ENCODE measurements at regions of chr18 and their contacts with region 1.

Region 1: GRCh38 chr18:32899819-32900218 is 127.0 kb upstream of the KLHL14 start:
- DNase-seq: no peak
- ATAC-seq: no peak
- H3K4me3 ChIP-seq: no peak overlapping the region
- H3K27ac ChIP-seq: no peak overlapping the region
- H3K4me1 ChIP-seq: no peaks in the 10 kb centered on the region
- H3K27me3 ChIP-seq: no peaks in the 10 kb centered on the region
- CTCF ChIP-seq: no peak

Region 2: DNA sequence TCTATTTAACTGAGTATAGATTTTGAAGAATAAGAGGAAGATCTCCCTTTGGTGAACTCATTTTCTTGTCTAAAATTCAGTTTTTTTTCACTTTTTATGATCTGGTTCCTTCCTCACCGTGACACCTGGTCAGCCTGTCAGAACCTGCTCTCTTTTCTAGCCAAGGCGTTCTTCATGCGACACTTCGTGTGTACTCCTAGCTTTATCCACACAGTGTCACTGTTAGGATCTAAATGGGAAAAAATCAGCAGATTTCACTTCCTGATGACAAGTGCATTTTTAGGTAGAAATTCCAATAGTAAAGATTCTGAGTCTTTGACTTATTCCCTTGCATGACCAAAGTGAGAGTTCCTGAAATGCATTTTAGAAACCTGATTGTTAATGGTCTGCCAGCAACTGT is 216.8 kb before region 1 on chr18:
- intact Hi-C with region 1: no loop called
- DNase-seq: no peak
- ATAC-seq: no peak
- H3K4me3 ChIP-seq: no peak overlapping the region
- H3K27ac ChIP-seq: no peak overlapping the region
- H3K4me1 ChIP-seq: no peaks in the 10 kb centered on the region
- H3K27me3 ChIP-seq: peaks cover 0 to 11% (median 0%) of the 10 kb centered on the region in 7 donors
- CTCF ChIP-seq: no peak

Region 3: DNA sequence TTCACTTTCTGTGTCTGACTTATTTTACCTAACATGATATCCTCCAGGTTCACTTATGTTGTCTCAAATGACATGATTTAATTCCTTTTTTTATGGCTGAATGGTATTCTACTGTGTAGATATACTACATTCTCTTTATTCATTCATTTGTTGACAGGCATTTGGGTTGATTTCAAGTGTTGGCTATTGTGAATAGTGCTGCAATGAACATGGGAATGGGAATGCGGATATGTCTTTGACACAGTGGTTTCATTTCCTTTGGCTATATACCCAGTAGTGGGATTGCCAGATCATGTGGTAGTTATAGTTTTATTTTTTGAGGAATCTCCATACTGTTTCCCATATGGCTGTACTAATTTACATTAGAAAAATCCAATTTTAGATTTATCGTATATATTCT is 68.4 kb after region 1 on chr18:
- intact Hi-C with region 1: loop called in 1 of 10 experiments (anchors 10 kb)
- DNase-seq: no peak
- ATAC-seq: no peak
- H3K4me3 ChIP-seq: no peak overlapping the region
- H3K27ac ChIP-seq: no peak overlapping the region
- H3K4me1 ChIP-seq: no peaks in the 10 kb centered on the region
- H3K27me3 ChIP-seq: no peaks in the 10 kb centered on the region
- CTCF ChIP-seq: no peak

Measured in heart right ventricle (tissue), 16 donors.